Mammary epithelial cell (primary cell): ENCODE measurements at regions of chr2 and their contacts with region 1.

Region 1: DNA sequence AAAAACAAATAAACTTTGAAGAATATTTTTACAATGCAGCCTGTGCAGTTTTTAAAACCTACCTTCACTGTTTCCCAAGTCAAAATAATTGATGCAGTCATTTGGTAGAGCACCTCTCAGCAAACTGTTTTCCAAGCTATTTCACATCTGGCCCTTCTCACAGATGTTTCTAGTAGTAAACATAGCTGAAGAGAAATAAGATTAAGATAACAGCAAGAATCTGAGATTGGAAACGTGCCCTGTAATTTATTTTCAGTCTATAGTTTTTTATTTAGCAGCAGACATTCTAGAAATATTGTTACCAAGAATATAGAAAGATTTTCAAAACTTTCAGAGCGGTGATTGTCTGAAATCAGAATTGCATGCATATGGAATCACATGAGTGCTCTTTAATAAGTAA is 440.2 kb downstream of the TRIB2 start:
- DNase-seq: no peak
- H3K4me3 ChIP-seq: no peak overlapping the region
- H3K27ac ChIP-seq: no peak overlapping the region
- H3K4me1 ChIP-seq: no peaks in the 10 kb centered on the region
- H3K27me3 ChIP-seq: peaks cover 4% of the 10 kb centered on the region
- CTCF ChIP-seq: no peak

Region 2: GRCh38 chr2:13114391-13114790 is 42.5 kb before region 1 on chr2:
- CTCF ChIA-PET with region 1: no interaction called
- dilution Hi-C with region 1: loop called (anchors 5 kb)
- in situ Hi-C with region 1: no loop called
- intact Hi-C with region 1: no loop called
- DNase-seq: peak; percentile 27
- H3K4me3 ChIP-seq: no peak overlapping the region
- H3K27ac ChIP-seq: no peak overlapping the region
- H3K4me1 ChIP-seq: peaks cover 16% of the 10 kb centered on the region
- H3K27me3 ChIP-seq: no peaks in the 10 kb centered on the region
- CTCF ChIP-seq: no peak